ENCODE measurements at regions of chr1 and their contacts with region 1.

Region 1: DNA sequence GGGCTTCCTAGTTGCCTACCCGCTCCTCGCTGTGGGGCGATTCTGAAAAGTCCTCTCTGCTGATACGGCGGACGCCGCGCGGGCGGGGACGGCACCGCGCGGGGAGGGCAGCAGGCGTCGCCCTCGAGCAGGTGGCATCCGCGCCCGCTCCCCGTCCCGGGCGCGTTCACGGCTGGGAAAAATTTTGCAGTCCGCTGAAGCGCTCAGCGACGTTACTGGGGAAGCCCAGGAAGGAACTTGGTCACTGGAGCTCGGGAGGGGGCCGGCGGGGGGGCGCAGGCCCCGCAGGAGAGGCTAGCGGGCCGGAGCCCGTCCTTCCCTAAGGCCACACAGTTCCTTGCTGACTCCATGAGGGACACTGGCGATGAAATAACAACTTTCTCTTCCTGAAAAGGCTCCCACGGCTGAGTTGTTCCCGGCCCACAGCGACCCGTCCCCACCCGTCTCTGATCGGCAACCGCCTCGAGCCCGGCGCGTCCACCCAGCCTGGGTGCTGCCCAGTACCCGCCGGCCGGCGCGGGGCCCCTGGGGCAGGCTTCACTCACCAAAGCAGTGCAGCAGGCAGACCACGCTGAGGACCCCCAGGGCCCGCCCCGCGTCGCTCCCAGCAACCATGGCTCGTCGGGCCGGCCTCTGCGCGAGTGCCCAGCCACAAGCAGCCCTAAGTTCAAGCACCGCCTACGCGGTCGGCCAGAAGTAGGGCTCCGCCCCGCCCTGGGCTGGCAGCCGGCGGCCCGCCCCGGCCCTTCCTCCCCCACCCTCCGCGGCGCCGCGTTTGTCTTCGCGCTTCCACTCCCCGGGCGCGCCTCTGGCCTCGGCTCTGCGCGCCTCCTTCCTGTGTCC is at the start of gene CD58:
- DNase-seq: peak; percentile 92
- H3K4me3 Mint-ChIP-seq: peak within 1 kb of the TSS; percentile 99
- H3K27ac Mint-ChIP-seq: peak within 1 kb of the TSS; percentile 93
- H3K4me1 Mint-ChIP-seq: peaks cover 72% of the 10 kb centered on the region
- H3K27me3 Mint-ChIP-seq: no peaks in the 10 kb centered on the region
- total RNA-seq, gene CD58: 21.9 to 27.2 TPM

Region 2: GRCh38 chr1:116504308-116505156 is 66.0 kb before region 1 on chr1:
- CTCF ChIA-PET with region 1: interaction called, 7 read pairs
- POLR2A ChIA-PET with region 1: interaction called, 3 read pairs
- intact Hi-C with region 1: loop called (anchors 2 kb)
- DNase-seq: peak; percentile 92
- H3K4me3 Mint-ChIP-seq: peak overlapping the region; percentile 38
- H3K27ac Mint-ChIP-seq: peak overlapping the region; percentile 97
- H3K4me1 Mint-ChIP-seq: peaks cover 65% of the 10 kb centered on the region
- H3K27me3 Mint-ChIP-seq: no peaks in the 10 kb centered on the region

Region 3: GRCh38 chr1:116586741-116587143 is 16.2 kb after region 1 on chr1:
- CTCF ChIA-PET with region 1: interaction called, 22 read pairs
- POLR2A ChIA-PET with region 1: no interaction called
- intact Hi-C with region 1: no loop called
- DNase-seq: no peak
- H3K4me3 Mint-ChIP-seq: no peak overlapping the region
- H3K27ac Mint-ChIP-seq: no peak overlapping the region
- H3K4me1 Mint-ChIP-seq: peaks cover 3% of the 10 kb centered on the region
- H3K27me3 Mint-ChIP-seq: no peaks in the 10 kb centered on the region

Region 4: DNA sequence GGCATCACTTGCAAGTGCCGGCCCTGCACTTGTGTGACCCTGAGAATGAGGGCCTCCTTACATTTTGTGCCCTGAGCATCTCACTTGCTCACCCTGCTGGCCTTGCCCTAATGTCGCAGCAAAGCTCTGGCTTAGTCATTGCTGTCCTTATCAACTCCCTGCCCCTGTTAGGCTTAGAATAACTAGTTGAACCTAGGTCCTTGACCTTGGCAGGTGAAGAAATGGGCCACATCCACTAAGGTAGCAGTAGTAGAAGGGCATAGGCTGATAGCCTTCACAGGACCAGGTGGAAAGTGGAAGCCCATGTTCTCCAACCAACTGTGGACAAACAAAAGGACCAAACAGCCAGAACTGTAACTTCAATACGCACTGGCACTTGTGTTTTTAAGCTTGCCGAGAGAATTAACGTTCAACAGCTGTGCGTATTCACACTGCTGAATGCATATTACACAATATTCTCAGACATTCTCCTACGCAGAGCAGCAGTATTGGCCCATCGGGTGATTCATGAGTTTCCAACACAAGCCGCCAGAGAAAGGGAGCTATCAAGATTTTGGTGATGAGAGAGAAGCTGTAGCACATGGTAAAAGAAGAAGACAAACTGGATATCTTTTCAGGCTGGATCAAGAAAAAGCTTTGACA is 311.4 kb after region 1 on chr1:
- CTCF ChIA-PET with region 1: interaction called, 6 read pairs
- POLR2A ChIA-PET with region 1: no interaction called
- intact Hi-C with region 1: loop called (anchors 10 kb)
- DNase-seq: peak; percentile 66
- H3K4me3 Mint-ChIP-seq: no peak overlapping the region
- H3K27ac Mint-ChIP-seq: no peak overlapping the region
- H3K4me1 Mint-ChIP-seq: peaks cover 19% of the 10 kb centered on the region
- H3K27me3 Mint-ChIP-seq: no peaks in the 10 kb centered on the region

Region 5: GRCh38 chr1:117121776-117122697 is 551.5 kb after region 1 on chr1:
- CTCF ChIA-PET with region 1: no interaction called
- POLR2A ChIA-PET with region 1: no interaction called
- intact Hi-C with region 1: loop called (anchors 5 kb)
- DNase-seq: peak; percentile 91
- H3K4me3 Mint-ChIP-seq: peak overlapping the region; percentile 72
- H3K27ac Mint-ChIP-seq: no peak overlapping the region
- H3K4me1 Mint-ChIP-seq: peaks cover 8% of the 10 kb centered on the region
- H3K27me3 Mint-ChIP-seq: peaks cover 8% of the 10 kb centered on the region

Measured in activated CD4-positive, alpha-beta memory T cell treated with anti-CD3 and anti-CD28 coated beads for 36 hours (primary cell).